ENCODE measurements at regions of chr17 and their contacts with region 1.

Region 1: DNA sequence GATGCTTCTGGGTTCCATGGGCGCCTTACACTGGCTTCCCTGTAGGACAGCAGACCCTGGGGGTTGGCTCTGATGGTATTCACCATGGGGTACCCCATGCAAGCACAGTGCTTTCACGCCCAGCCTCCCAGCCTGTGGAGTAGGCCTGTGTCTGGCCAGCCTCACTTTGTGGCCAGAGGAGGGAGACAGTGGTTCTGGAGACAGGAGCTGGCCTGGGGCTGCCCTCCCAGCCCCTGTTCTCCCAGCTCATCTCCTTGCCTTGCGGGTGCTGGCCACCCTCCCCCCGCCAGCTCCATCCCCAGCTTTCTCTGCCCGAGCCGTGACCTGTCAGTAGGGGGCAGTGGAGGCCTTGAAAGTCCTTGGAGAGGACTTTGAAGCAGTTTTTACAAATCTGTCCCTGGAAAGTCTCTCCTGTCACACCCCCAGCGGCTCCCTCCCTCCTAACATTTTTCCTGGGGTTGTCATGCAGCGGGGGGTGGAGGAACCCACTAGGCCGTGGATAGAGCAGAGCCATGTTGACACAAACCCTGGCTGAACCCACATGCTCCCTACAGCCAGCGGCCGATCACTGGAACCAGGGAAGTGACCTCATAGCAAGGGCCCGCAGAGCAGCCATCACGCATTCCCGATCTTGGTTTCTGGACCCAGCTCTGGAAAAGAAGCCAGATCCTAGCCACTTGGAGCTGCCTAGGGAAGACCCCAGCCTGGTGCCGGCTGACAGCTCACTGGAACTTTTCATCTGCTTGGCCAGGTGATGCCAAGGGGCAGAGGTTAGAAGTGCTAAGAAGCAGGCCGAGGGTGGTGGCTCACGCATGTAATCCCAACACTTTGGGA is 289.4 kb downstream of the SEC14L1 start:
- DNase-seq: peak; percentile 97

Region 2: DNA sequence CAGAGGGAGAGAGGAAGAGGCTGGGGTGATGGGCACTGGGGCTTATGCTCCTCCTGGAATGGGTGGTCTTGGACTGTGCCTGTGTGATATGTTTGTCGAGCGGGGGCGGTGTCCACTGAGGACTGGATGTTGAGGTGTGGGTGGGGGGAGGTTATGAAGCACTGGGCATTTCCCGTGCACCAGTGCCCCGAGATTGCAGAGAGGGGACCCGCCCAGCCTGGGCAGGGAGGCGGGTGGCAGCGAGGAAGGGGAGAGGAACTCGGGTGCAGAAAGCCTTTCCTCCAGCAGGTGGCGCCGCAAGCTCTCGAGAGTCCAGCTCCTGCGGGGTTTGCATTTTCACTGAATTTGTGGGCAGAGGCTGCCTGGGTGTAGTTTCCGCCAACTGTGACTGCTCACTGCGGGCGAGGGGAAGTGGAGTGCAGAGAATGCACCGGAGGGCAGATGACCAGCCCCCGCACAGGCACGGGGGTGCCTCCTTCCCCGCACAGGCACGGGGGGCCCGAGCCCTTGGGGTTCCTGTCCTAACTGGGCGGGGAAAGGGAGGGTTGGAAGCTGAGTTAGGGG is 98.8 kb before region 1 on chr17:
- intact Hi-C with region 1: loop called in 1 of 2 experiments (anchors 5 kb)
- DNase-seq: peak; percentile 98

Region 3: DNA sequence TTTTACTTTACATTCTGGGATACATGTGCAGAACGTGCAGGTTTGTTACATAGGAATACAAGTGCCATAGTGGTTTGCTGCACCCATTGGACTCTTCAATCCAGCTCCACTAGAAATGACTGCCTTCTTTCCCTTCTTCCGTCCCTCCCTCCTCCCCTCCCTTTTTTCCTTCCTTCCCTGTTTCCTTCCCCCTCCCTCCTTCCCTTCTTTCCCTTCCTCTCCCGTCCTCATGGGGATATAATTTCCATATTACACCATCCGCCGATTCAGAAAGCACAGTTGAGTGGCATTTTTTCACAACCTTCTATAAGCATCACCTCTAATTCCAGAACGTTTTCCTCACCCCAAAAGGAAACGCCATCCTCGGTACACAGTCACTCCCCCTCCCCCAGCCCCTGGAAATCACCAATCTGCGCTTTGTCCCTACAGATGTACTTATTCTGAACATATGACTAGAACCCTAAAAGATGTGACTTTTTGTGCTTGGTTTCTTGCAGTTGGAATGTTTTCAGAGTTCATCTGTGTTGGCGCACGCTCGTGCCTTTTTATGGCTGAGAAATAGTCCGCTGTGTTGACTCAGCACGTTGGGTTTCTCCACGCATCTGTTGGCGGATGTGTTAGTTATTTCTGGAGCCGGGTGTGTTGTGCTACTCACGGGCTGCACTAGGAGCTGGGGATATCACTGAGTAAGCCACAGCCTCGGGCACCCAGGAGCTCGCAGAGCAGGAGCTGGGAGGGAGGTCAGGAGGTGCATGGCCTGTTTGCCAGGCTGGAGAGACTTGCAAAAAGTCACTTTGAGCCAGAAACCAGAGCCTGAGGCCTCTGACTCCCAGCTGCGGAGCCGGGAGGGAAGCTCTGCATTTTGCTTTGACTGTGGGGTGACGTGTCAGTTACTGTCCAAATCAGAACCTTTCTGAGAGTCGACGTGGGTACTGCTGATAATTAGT is 47.1 kb after region 1 on chr17:
- intact Hi-C with region 1: loop called in 1 of 2 experiments (anchors 5 kb)
- DNase-seq: peak; percentile 91

Region 4: DNA sequence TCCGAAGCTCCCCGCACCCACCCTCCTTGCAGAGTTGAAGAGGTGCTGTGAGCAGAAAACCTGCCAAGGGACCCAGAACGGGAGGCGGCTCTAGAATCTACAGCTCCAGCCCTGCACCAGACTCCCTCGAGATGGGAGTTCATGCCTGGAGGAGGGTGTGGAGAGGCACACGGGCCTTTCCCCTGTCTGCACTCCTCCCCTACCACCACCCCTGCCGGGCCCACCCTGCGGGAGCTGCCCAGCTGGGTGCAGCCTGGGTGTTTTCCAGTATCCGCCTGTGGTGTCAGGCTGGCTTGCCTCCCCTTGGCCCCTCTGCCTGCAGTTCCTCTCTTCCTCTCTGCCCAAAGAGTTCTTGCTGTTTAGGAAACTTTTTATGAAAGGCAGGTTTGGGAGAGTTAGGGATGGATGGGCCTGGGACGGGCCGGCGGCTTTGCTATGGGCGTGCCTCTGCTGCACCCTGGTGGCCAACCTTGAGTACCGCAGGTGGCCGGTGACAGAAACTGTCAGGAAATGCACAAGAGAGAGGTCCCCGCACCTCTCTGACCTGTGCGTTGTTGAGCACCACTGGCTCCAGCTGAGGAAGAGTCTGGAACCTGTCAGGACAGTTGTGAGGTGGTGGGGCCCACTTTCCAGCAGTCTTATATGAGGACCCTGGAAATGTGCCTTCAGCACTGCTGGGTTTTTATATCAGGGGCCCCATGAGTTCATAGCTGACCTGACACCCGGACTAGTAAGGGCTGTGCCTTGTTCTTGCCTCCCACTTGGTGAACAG is 64.7 kb after region 1 on chr17:
- intact Hi-C with region 1: loop called in 1 of 2 experiments (anchors 2 kb)
- DNase-seq: peak; percentile 93

Measured in posterior vena cava (tissue), 2 donors.